ENCODE measurements at regions of chr7 and their contacts with region 1.

Region 1: GRCh38 chr7:80078159-80078731 is 56.4 kb upstream of the GNAI1 start:
- DNase-seq: no peak
- ATAC-seq: no peak
- H3K4me3 ChIP-seq: peak overlapping the region in 1 of 2 experiments; percentile 19; a peak in 3 of 4 replicates
- H3K27ac ChIP-seq: no peak overlapping the region
- H3K4me1 ChIP-seq: no peaks in the 10 kb centered on the region
- H3K27me3 ChIP-seq: no peaks in the 10 kb centered on the region
- CTCF ChIP-seq: no peak

Region 2: GRCh38 chr7:79761876-79762429 is 316.3 kb before region 1 on chr7:
- CTCF ChIA-PET with region 1: no interaction called
- POLR2A ChIA-PET with region 1: no interaction called
- in situ Hi-C with region 1: no loop called
- intact Hi-C with region 1: no loop called
- DNase-seq: no peak
- ATAC-seq: no peak
- H3K4me3 ChIP-seq: no peak overlapping the region
- H3K27ac ChIP-seq: no peak overlapping the region
- H3K4me1 ChIP-seq: no peaks in the 10 kb centered on the region
- H3K27me3 ChIP-seq: no peaks in the 10 kb centered on the region
- CTCF ChIP-seq: no peak

Region 3: GRCh38 chr7:79964463-79964862 is 113.8 kb before region 1 on chr7:
- CTCF ChIA-PET with region 1: interaction called, 11 read pairs
- POLR2A ChIA-PET with region 1: no interaction called
- in situ Hi-C with region 1: no loop called
- intact Hi-C with region 1: no loop called
- DNase-seq: no peak
- ATAC-seq: no peak
- H3K4me3 ChIP-seq: no peak overlapping the region
- H3K27ac ChIP-seq: no peak overlapping the region
- H3K4me1 ChIP-seq: no peaks in the 10 kb centered on the region
- H3K27me3 ChIP-seq: no peaks in the 10 kb centered on the region
- CTCF ChIP-seq: no peak

Region 4: GRCh38 chr7:80095545-80095944 is 17.3 kb after region 1 on chr7:
- CTCF ChIA-PET with region 1: no interaction called
- POLR2A ChIA-PET with region 1: no interaction called
- in situ Hi-C with region 1: no loop called
- intact Hi-C with region 1: no loop called
- DNase-seq: no peak
- ATAC-seq: no peak
- H3K4me3 ChIP-seq: no peak overlapping the region
- H3K27ac ChIP-seq: no peak overlapping the region
- H3K4me1 ChIP-seq: no peaks in the 10 kb centered on the region
- H3K27me3 ChIP-seq: no peaks in the 10 kb centered on the region
- CTCF ChIP-seq: peak; percentile 58; the same call in 1 of the 2 replicates

Region 5: GRCh38 chr7:80428161-80429054 is 350.2 kb after region 1 on chr7:
- CTCF ChIA-PET with region 1: no interaction called
- POLR2A ChIA-PET with region 1: no interaction called
- in situ Hi-C with region 1: no loop called
- intact Hi-C with region 1: no loop called
- DNase-seq: peak; percentile 76
- ATAC-seq: peak; percentile 97
- H3K4me3 ChIP-seq: no peak overlapping the region
- H3K27ac ChIP-seq: no peak overlapping the region
- H3K4me1 ChIP-seq: no peaks in the 10 kb centered on the region
- H3K27me3 ChIP-seq: peaks cover 2% of the 10 kb centered on the region; the same call in 1 of the 2 replicates
- CTCF ChIP-seq: peak; percentile 73; the same call in 1 of the 2 replicates

Measured in Panc1 (cell line).